Mammary epithelial cell (primary cell): ENCODE measurements at regions of chr12 and their contacts with region 1.

Region 1: DNA sequence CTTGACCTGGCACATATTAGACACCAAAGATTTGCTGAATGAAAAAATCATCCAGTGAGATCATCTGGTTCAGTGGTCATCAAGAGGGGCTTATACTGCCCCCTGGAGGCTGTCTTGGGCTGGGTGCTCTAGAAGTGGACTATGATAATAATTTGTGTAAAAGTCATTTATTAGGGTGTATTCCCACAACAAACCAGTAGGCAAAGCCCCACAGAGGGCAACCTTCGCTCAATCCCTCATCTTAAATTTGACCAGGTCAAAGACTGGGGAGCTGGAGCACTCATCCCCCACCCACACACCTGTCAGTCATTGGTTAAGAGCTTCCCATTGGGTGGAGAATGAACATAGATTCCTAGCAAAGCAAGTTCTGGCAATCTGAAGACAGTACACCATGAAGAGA is 20.0 kb upstream of the FICD start:
- DNase-seq: peak; percentile 22
- H3K4me3 ChIP-seq: no peak overlapping the region
- H3K27ac ChIP-seq: no peak overlapping the region
- H3K4me1 ChIP-seq: no peaks in the 10 kb centered on the region
- H3K27me3 ChIP-seq: peaks cover 6% of the 10 kb centered on the region
- CTCF ChIP-seq: peak; percentile 71 to 92

Region 2: DNA sequence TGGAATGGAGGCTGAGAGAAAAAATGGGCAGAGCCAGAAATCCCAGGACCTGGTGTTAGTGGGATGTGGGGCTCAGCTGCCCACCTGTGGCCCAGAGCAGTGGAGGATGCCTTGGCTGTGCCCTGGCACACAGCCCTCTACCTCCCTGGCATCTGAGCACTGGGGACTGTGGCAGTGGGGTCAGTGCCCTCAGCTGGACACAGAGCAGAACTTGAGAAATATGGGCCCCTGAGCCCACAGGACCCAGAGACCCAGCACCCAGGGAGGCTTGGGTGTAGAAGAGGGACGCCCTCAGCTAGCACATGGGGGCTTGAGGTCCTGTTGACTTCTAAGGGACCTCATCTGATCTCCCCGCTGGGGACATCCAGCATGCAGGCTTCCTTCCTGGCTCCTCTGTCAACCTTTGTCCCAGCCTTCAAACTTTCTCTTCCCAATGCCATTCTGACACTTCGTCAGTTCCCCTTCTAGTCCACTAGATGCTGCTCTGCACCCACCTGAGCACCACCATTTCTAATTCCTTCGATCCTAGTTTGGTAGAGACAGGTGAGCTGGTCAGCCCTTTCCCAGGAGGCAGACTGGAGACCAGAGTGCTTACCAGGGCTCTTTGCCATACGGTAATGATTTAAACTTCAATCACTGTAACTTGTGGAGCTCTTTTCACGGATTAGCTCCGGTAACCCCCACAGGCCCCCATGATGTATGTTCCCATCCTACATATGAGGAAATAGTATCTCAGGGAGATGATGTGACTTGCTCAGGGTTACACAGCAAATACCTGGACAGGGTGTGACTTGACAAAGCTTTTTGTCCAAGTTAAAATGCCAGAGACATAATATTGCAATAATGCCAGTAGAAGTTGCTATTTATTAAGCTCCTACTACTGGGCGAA is 576.9 kb before region 1 on chr12:
- CTCF ChIA-PET with region 1: no interaction called
- dilution Hi-C with region 1: no loop called
- in situ Hi-C with region 1: no loop called
- intact Hi-C with region 1: loop called (anchors 1 kb)
- DNase-seq: peak; percentile 39
- H3K4me3 ChIP-seq: no peak overlapping the region
- H3K27ac ChIP-seq: no peak overlapping the region
- H3K4me1 ChIP-seq: peaks cover 6% of the 10 kb centered on the region
- H3K27me3 ChIP-seq: no peaks in the 10 kb centered on the region
- CTCF ChIP-seq: peak; percentile 94 to 95

Region 3: GRCh38 chr12:108099073-108099472 is 396.0 kb before region 1 on chr12:
- CTCF ChIA-PET with region 1: no interaction called
- dilution Hi-C with region 1: no loop called
- in situ Hi-C with region 1: no loop called
- intact Hi-C with region 1: loop called (anchors 2 kb)
- DNase-seq: no peak
- H3K4me3 ChIP-seq: no peak overlapping the region
- H3K27ac ChIP-seq: no peak overlapping the region
- H3K4me1 ChIP-seq: no peaks in the 10 kb centered on the region
- H3K27me3 ChIP-seq: no peaks in the 10 kb centered on the region
- CTCF ChIP-seq: peak; percentile 45 to 49

Region 4: DNA sequence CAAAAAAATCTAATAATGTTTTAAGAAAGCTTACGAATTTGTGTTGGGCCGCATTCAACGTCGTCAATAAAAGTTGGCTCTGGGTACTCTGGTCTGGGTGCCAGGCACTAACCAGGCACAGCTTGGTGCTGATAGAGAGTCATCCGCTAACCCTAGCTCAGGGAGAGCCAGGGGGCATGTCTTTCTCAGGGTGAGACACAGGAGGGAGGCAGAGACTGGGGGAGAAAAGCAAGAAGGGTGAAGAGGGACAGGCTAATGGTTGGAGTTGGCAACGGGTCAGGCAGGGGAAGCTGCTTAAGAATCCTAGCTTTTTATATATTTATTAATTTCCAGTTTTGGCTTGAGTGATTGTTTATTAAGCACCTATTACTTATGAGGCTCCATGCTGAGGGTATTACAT is 260.9 kb before region 1 on chr12:
- CTCF ChIA-PET with region 1: no interaction called
- dilution Hi-C with region 1: no loop called
- in situ Hi-C with region 1: no loop called
- intact Hi-C with region 1: loop called (anchors 5 kb)
- DNase-seq: no peak
- H3K4me3 ChIP-seq: no peak overlapping the region
- H3K27ac ChIP-seq: no peak overlapping the region
- H3K4me1 ChIP-seq: no peaks in the 10 kb centered on the region
- H3K27me3 ChIP-seq: no peaks in the 10 kb centered on the region
- CTCF ChIP-seq: peak in 1 of 2 donors; percentile 31

Region 5: GRCh38 chr12:108457006-108457733 is 37.9 kb before region 1 on chr12:
- CTCF ChIA-PET with region 1: no interaction called
- dilution Hi-C with region 1: no loop called
- in situ Hi-C with region 1: no loop called
- intact Hi-C with region 1: loop called (anchors 2 kb)
- DNase-seq: peak; percentile 45
- H3K4me3 ChIP-seq: no peak overlapping the region
- H3K27ac ChIP-seq: no peak overlapping the region
- H3K4me1 ChIP-seq: no peaks in the 10 kb centered on the region
- H3K27me3 ChIP-seq: peaks cover 5% of the 10 kb centered on the region
- CTCF ChIP-seq: peak; percentile 76 to 83

Region 6: DNA sequence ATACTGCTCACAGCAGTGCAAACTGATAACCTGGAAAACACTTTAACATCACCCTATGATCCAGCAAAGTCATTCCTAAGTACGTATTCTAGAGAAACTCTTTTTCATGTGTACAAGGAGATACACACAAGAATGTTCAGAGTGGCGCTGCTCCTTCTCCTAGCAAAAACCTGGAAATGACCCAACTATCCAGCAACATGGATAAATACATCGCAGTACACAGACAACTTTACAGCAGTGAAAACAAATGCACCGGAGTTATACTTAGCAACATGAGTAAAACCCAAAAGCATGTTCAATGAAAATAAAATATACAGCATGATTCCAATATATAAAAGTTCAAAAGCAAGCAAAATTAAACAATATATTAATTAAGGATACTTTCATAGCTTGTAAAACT is 47.3 kb after region 1 on chr12:
- CTCF ChIA-PET with region 1: no interaction called
- dilution Hi-C with region 1: no loop called
- in situ Hi-C with region 1: no loop called
- intact Hi-C with region 1: no loop called
- DNase-seq: no peak
- H3K4me3 ChIP-seq: no peak overlapping the region
- H3K27ac ChIP-seq: no peak overlapping the region
- H3K4me1 ChIP-seq: peaks cover 2% of the 10 kb centered on the region
- H3K27me3 ChIP-seq: no peaks in the 10 kb centered on the region
- CTCF ChIP-seq: no peak